Adrenal gland (tissue), 19 donors: ENCODE measurements at regions of chr9 and their contacts with region 1.

Region 1: DNA sequence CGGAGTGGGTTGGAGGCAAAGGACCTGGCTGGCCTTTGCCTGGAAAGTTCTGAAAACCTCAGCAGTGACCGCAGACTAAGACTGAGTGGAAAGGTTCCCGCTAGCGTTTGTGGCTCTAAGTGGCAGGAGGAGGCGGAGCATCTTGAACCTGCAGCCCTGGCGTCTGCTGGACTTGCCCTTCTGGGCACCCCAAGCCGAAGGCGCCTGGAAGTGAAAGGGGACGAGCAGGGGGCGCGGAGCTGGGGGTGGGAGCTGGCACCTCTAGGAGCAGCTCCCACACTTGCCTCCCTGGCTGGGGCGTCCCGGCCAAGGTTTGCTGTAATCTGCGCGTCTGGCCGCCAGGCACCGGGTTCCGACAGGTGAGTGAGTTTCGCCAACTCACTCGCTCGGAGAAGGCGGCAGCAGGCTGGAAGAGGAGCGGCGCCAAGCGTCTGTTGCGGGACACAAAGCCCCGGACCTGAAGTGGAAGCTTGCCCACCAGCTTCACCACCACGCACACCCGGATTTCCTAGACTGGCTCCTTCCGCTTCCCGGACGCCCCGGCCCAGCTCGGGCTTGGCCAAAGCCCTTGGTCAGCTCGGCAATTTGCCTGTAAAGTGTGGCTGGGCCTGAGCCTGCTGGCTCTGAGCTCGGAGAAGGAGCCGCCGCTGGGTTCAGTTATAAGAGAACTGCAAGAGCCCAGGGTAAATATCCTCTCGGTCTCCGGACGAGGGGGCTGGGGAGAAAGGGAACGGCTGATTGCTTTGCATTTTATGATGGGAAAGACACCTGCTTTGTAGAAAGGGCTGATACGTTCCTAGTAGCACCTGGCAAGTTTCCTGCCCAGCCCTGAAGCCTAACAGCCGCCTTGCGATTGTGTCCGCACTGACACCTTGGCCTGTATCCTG is at the start of gene GNA14:
- DNase-seq: peak; percentile 33 to 68 (median 45)
- H3K4me3 ChIP-seq: peak within 1 kb of the TSS in 2 of 4 donors; percentile 14 to 64
- H3K27ac ChIP-seq: peak within 1 kb of the TSS in 2 of 5 donors; percentile 27 to 74
- H3K4me1 ChIP-seq: peaks cover 0 to 11% of the 10 kb centered on the region in 2 donors
- H3K27me3 ChIP-seq: peaks cover 12% of the 10 kb centered on the region
- CTCF ChIP-seq: peak in 1 of 6 experiments; percentile 5
- POLR2A ChIP-seq: no peak
- total RNA-seq, gene GNA14: 1.7 to 11.9 (median 5.6) TPM

Region 2: DNA sequence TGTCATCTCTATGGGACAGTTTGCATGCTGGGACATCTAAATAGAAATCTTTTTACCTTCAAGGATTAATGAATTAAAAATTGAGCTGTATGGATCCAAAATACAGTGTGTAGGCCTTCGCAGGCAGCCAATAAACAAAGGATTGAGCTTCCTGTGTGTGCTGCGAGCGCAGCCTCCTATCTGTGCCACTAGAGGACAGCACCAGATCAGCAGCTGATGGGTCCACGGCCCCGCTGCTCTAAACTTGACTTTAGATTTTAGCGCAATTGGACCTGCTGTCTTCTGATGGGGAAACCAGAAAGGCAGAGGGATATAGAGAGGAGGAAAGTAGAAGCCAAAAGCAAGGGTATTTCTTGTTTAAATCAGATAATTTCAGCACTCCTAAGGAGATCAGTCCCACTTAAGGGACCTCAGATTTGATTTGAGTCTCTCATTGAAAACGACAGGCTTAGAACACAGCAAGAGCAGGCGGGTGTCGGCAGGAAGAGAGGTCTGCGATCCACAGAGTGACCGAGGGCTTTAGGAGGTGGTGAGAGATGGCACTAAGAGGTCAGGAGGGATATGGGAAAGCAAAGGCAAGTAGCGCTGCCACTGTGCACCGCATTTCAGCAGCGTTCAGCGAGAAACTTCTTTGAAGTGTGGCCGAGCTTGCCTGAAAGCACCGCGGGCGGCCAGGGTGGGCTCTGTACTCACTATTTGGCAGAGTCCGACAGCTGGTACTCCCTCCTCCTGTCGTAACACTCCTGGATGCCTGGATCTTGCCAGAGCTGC is 214.6 kb before region 1 on chr9:
- intact Hi-C with region 1: loop called in 1 of 2 experiments (anchors 10 kb)
- DNase-seq: peak; percentile 44 to 85 (median 69)
- H3K4me3 ChIP-seq: no peak overlapping the region
- H3K27ac ChIP-seq: no peak overlapping the region
- H3K4me1 ChIP-seq: no peaks in the 10 kb centered on the region
- H3K27me3 ChIP-seq: no peaks in the 10 kb centered on the region
- CTCF ChIP-seq: peak; percentile 78 to 98 (median 92)
- POLR2A ChIP-seq: no peak

Region 3: GRCh38 chr9:77456829-77457437 is 191.5 kb before region 1 on chr9:
- intact Hi-C with region 1: loop called in 1 of 2 experiments (anchors 10 kb)
- DNase-seq: peak; percentile 81 to 96 (median 88)
- H3K4me3 ChIP-seq: no peak overlapping the region
- H3K27ac ChIP-seq: no peak overlapping the region
- H3K4me1 ChIP-seq: no peaks in the 10 kb centered on the region
- H3K27me3 ChIP-seq: no peaks in the 10 kb centered on the region
- CTCF ChIP-seq: peak; percentile 82 to 95 (median 85)
- POLR2A ChIP-seq: no peak

Region 4: GRCh38 chr9:77679088-77679487 is 30.6 kb after region 1 on chr9:
- intact Hi-C with region 1: no loop called
- DNase-seq: no peak
- H3K4me3 ChIP-seq: no peak overlapping the region
- H3K27ac ChIP-seq: peak overlapping the region in 1 of 5 donors; percentile 52
- H3K4me1 ChIP-seq: no peaks in the 10 kb centered on the region
- H3K27me3 ChIP-seq: no peaks in the 10 kb centered on the region
- CTCF ChIP-seq: no peak
- POLR2A ChIP-seq: no peak

Region 5: DNA sequence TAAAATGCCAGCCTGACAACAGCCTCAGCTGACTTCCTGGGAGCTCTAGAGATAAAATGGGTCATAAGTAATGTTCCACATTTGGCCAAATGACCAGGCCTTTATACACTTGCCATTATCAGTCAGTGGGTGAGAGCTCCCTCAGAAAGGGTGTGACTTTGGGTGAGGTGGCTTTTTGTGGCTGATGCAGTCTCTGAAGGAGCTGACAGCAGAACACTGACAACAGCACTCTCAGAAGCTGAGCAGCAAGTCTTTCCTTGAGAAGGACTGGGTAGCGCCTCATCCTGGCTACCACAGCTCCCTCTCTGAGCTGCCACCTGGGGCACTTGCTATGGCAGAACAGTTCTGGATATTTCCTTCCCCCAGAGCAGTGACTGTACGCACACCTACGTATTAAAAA is 405.1 kb after region 1 on chr9:
- intact Hi-C with region 1: no loop called
- DNase-seq: no peak
- H3K4me3 ChIP-seq: no peak overlapping the region
- H3K27ac ChIP-seq: no peak overlapping the region
- H3K4me1 ChIP-seq: no peaks in the 10 kb centered on the region
- H3K27me3 ChIP-seq: no peaks in the 10 kb centered on the region
- CTCF ChIP-seq: no peak
- POLR2A ChIP-seq: no peak